Left ventricle myocardium superior (tissue), 1 donor: ENCODE measurements at regions of chr10 and their contacts with region 1.

Region 1: GRCh38 chr10:74008212-74008731 is 10.4 kb downstream of the VCL start:
- DNase-seq: no peak
- ATAC-seq: no peak

Region 2: DNA sequence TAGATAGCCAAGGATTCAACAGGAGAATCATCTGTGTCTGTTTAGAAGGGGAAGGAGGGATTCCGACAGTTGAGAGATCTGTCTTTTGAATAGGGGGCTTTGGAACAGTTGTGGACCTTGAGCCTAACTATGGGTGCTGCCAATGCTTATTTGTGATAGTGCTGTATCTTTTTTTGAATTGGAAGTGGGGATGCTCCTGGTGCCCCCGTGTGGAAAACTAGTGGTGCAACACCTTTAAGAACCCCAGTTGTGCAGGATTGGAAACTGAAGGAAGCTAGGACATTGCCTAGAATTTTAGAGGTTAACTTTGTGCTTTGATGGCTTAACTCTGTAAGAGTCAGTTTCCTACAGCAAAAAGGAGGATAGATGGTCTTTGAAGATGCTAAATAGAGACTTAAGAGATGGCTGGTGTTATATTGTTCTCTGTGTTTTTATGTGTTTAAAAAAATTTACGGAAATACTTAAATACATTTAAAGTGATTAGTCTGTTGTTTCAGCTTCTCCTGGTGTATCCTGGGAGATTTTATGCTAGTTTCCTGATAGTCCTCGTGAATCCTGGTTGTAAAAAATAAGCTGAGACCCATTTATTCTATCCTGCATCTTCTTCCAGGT is 73.0 kb after region 1 on chr10:
- intact Hi-C with region 1: loop called (anchors 10 kb)
- DNase-seq: no peak
- ATAC-seq: peak; percentile 64